Caco-2 (cell line): ENCODE measurements at regions of chrX and their contacts with region 1.

Region 1: DNA sequence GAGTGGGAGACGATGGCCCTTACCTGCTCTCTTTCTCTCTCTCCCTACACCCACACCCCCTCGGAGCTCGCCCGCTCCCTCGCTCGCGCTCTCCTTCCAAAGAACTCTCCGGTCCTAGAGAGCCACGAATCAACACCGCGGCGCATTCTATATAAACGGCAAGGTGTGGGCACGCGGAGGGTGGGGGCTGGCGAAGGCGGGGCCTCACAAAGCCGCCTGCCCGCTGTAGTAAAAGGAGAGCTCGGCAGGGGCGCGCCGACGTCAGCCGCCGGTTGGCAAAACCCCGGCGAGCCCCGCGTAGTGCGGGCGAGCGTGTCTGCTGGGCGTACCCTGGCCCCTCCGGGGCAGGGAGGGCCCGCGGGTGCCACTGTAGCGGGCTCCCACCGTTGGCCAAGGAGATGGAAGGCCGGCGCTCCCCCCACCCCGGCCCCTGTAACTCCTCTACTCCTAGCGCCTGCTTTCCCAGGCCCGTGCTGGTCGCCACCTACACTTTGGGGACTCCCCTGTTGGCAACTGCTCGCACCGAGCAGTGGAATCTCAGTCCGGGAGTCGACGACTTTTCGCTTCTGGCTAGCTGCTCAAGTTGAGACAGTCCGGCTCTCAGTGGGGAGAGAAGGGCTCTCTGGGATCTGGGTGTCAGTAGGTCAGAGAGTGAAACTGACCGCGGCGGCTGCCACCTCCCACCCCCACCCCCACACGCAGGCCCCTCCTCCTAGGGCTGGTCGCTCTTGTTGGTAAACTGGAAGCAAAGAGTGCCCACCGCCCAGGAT is 325.5 kb upstream of the F9 start:
- DNase-seq: peak; percentile 57 to 71
- H3K4me3 ChIP-seq: peak overlapping the region; percentile 53
- H3K4me3 Mint-ChIP-seq: peak overlapping the region; percentile 95
- H3K27ac Mint-ChIP-seq: peak overlapping the region; percentile 92
- H3K4me1 ChIP-seq: 0 out of 2 replicates have a peak, but pooled peaks cover 3% of the 10 kb centered on the region
- H3K4me1 Mint-ChIP-seq: peaks cover 7% of the 10 kb centered on the region
- H3K27me3 ChIP-seq: no peaks in the 10 kb centered on the region
- H3K27me3 Mint-ChIP-seq: no peaks in the 10 kb centered on the region
- CTCF ChIP-seq: no peak

Region 2: DNA sequence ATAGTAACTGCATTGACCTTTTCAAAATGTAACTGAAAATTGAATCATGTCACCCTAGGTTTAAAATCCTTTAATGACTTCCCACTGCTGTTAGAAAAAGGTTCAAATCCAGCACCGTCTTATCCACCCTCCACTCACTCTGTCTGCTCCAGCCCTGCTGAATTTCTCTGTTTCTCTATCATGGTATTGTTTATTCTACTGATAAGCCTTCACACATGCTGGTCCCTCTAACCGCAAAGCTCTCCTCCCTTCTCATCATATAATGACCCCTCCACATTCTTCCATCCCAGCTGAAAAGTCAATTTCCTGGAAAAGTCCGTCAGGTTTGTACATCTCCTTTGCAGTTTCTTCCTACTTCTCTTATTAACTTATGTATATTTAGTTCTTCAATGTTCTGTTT is 63.7 kb before region 1 on chrX:
- CTCF ChIA-PET with region 1: no interaction called
- POLR2A ChIA-PET with region 1: no interaction called
- intact Hi-C with region 1: loop called (anchors 2 kb)
- DNase-seq: no peak
- H3K4me3 ChIP-seq: no peak overlapping the region
- H3K4me3 Mint-ChIP-seq: no peak overlapping the region
- H3K27ac Mint-ChIP-seq: no peak overlapping the region
- H3K4me1 ChIP-seq: peaks cover 7% of the 10 kb centered on the region; the same call in 1 of the 2 replicates
- H3K4me1 Mint-ChIP-seq: no peaks in the 10 kb centered on the region
- H3K27me3 ChIP-seq: no peaks in the 10 kb centered on the region
- H3K27me3 Mint-ChIP-seq: no peaks in the 10 kb centered on the region
- CTCF ChIP-seq: no peak

Region 3: DNA sequence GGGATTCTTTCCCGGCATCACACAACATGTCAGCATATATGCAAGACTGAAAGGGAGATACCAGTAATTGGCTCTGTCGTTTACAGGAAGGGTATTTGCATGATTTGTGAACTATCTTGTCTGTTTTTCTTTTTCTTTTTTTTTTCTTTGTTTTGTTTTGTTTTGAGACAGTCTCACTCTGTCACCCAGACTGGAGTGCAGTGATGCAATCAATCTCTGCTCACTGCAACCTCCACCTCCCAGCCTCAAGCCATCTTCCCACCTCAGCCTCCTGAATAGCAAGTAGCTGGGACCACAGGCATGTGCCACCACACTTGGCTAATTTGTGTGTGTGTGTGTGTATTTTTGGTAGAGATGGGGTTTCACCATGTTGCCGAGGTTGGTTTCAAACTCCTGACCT is 62.8 kb after region 1 on chrX:
- CTCF ChIA-PET with region 1: no interaction called
- POLR2A ChIA-PET with region 1: no interaction called
- intact Hi-C with region 1: loop called (anchors 5 kb)
- DNase-seq: no peak
- H3K4me3 ChIP-seq: no peak overlapping the region
- H3K4me3 Mint-ChIP-seq: no peak overlapping the region
- H3K27ac Mint-ChIP-seq: no peak overlapping the region
- H3K4me1 ChIP-seq: 0 out of 2 replicates have a peak, but pooled peaks cover 3% of the 10 kb centered on the region
- H3K4me1 Mint-ChIP-seq: peaks cover 7% of the 10 kb centered on the region
- H3K27me3 ChIP-seq: no peaks in the 10 kb centered on the region
- H3K27me3 Mint-ChIP-seq: no peaks in the 10 kb centered on the region
- CTCF ChIP-seq: no peak

Region 4: DNA sequence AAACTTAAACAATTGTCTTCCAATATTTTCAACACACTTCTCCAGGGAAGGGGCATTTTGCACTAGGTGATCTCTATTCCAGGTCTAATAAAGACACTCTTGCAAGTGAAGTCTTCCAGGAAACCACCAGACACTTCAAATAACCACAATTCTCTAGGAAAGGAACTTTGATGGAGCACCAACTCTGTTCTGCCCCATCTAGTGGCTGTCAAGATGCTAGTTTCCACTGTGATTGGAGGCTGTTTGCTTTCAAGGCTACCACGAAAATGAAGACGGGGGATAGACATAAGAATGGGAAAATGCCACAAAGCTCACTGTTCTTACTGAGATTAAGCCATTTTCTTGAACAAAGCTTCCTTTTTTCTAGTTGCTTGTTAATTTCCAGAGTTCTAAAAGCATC is 224.8 kb after region 1 on chrX:
- CTCF ChIA-PET with region 1: no interaction called
- POLR2A ChIA-PET with region 1: no interaction called
- intact Hi-C with region 1: loop called (anchors 10 kb)
- DNase-seq: peak in 1 of 2 experiments; percentile 5
- H3K4me3 ChIP-seq: no peak overlapping the region
- H3K4me3 Mint-ChIP-seq: no peak overlapping the region
- H3K27ac Mint-ChIP-seq: no peak overlapping the region
- H3K4me1 ChIP-seq: no peaks in the 10 kb centered on the region
- H3K4me1 Mint-ChIP-seq: no peaks in the 10 kb centered on the region
- H3K27me3 ChIP-seq: no peaks in the 10 kb centered on the region
- H3K27me3 Mint-ChIP-seq: peaks cover 7% of the 10 kb centered on the region
- CTCF ChIP-seq: peak in 1 of 2 experiments; percentile 50